ENCODE measurements at regions of chr2 and their contacts with region 1.

Region 1: GRCh38 chr2:27370026-27370815 is at the starts of genes EIF2B4 and SNX17:
- DNase-seq: peak; percentile 100
- H3K4me3 ChIP-seq: peak within 1 kb of the TSS; percentile 65 to 86 (median 78)
- H3K27ac ChIP-seq: peak within 1 kb of the TSS; percentile 50
- H3K4me1 ChIP-seq: peaks cover 14% of the 10 kb centered on the region
- H3K27me3 ChIP-seq: no peaks in the 10 kb centered on the region
- CTCF ChIP-seq: peak; percentile 89 to 91
- POLR2A ChIP-seq: peak; percentile 91
- total RNA-seq, gene EIF2B4: 43.7 and 48.9 TPM in 2 replicates
- total RNA-seq, gene SNX17: 86.5 and 103 TPM in 2 replicates

Region 2: GRCh38 chr2:27211829-27212627 is 158.2 kb before region 1 on chr2 and contains the starts of genes ATRAID and SLC5A6:
- CTCF ChIA-PET with region 1: interaction called, 3 read pairs
- POLR2A ChIA-PET with region 1: no interaction called
- dilution Hi-C with region 1: no loop called
- intact Hi-C with region 1: loop called (anchors 5 kb)
- DNase-seq: peak; percentile 92
- H3K4me3 ChIP-seq: peak within 1 kb of the TSS; percentile 68 to 91 (median 88)
- H3K27ac ChIP-seq: peak within 1 kb of the TSS; percentile 89
- H3K4me1 ChIP-seq: peaks cover 17% of the 10 kb centered on the region
- H3K27me3 ChIP-seq: no peaks in the 10 kb centered on the region
- CTCF ChIP-seq: no peak
- POLR2A ChIP-seq: peak; percentile 98
- total RNA-seq, gene ATRAID: 84.3 and 86.6 TPM in 2 replicates
- total RNA-seq, gene SLC5A6: 42.7 and 52.0 TPM in 2 replicates

Region 3: GRCh38 chr2:27249891-27250651 is 120.2 kb before region 1 on chr2:
- CTCF ChIA-PET with region 1: interaction called, 3 read pairs
- POLR2A ChIA-PET with region 1: no interaction called
- dilution Hi-C with region 1: no loop called
- intact Hi-C with region 1: loop called (anchors 5 kb)
- DNase-seq: peak; percentile 64
- H3K4me3 ChIP-seq: no peak overlapping the region
- H3K27ac ChIP-seq: no peak overlapping the region
- H3K4me1 ChIP-seq: peaks cover 15% of the 10 kb centered on the region
- H3K27me3 ChIP-seq: no peaks in the 10 kb centered on the region
- CTCF ChIP-seq: peak; percentile 83 to 89
- POLR2A ChIP-seq: no peak

Region 4: GRCh38 chr2:27322766-27323595 is 47.2 kb before region 1 on chr2 and contains the start of gene MPV17:
- CTCF ChIA-PET with region 1: interaction called, 6 read pairs
- POLR2A ChIA-PET with region 1: no interaction called
- dilution Hi-C with region 1: no loop called
- intact Hi-C with region 1: loop called (anchors 1 kb)
- DNase-seq: peak; percentile 90
- H3K4me3 ChIP-seq: peak within 1 kb of the TSS; percentile 70 to 91 (median 90)
- H3K27ac ChIP-seq: peak within 1 kb of the TSS; percentile 95
- H3K4me1 ChIP-seq: peaks cover 26% of the 10 kb centered on the region
- H3K27me3 ChIP-seq: no peaks in the 10 kb centered on the region
- CTCF ChIP-seq: no peak
- POLR2A ChIP-seq: peak; percentile 98
- total RNA-seq, gene MPV17: 66.5 and 74.7 TPM in 2 replicates

Region 5: DNA sequence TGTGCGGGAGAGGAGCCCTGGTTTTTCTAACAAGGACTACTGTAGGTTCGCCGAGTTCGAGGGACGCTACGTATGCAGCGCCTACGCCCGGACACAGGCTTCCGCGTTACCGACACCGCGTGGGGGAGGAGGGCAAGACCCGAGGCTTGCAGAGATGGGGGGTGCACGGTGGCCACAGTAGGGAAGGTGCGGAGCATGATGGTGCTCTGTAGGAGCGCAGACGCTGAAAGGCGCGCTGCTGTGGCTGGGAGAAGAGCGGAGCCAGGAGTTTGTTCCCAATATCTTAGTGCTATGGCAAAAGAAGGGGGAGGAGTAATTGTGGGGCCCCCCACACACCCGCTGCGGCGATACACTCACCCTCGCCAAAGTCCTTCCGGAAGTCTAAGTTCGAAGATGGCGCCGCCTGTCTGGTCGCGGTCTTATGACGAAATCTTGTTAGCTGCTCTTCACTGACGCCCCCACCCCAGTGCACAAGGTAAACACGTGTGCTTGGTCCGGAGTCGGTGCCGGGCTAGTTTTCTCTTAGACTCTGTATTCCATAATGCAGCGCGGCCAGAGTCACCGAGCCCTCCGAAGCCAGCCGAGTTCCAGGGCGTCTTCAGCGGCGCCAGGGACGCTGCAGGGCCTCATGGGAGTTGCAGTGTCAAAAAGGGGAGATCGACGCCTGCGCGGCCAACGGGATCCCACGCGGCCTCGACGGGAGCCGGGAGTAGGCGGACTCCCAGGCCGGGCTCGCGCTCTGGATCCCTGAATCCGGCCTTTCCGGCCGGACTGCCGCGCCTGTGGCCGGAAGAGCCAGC is 13.6 kb before region 1 on chr2 and contains the start of gene GTF3C2:
- CTCF ChIA-PET with region 1: interaction called, 8 read pairs
- POLR2A ChIA-PET with region 1: interaction called, 7 read pairs
- dilution Hi-C with region 1: no loop called
- intact Hi-C with region 1: loop called (anchors 1 kb)
- DNase-seq: peak; percentile 98
- H3K4me3 ChIP-seq: peak within 1 kb of the TSS; percentile 40 to 90 (median 63)
- H3K27ac ChIP-seq: peak within 1 kb of the TSS; percentile 83
- H3K4me1 ChIP-seq: peaks cover 16% of the 10 kb centered on the region
- H3K27me3 ChIP-seq: no peaks in the 10 kb centered on the region
- CTCF ChIP-seq: no peak
- POLR2A ChIP-seq: no peak
- total RNA-seq, gene GTF3C2: 57.4 and 63.2 TPM in 2 replicates

Region 6: GRCh38 chr2:27380626-27381545 is 10.7 kb after region 1 on chr2 and contains the start of gene ZNF513:
- CTCF ChIA-PET with region 1: interaction called, 4 read pairs
- POLR2A ChIA-PET with region 1: no interaction called
- dilution Hi-C with region 1: no loop called
- intact Hi-C with region 1: loop called (anchors 1 kb)
- DNase-seq: peak; percentile 95
- H3K4me3 ChIP-seq: peak within 1 kb of the TSS; percentile 75 to 85 (median 77)
- H3K27ac ChIP-seq: peak within 1 kb of the TSS; percentile 97
- H3K4me1 ChIP-seq: peaks cover 17% of the 10 kb centered on the region
- H3K27me3 ChIP-seq: no peaks in the 10 kb centered on the region
- CTCF ChIP-seq: no peak
- POLR2A ChIP-seq: no peak
- total RNA-seq, gene ZNF513: 19.0 and 20.7 TPM in 2 replicates

Region 7: GRCh38 chr2:27489498-27490397 is 119.5 kb after region 1 on chr2 and contains the start of gene IFT172:
- CTCF ChIA-PET with region 1: no interaction called
- POLR2A ChIA-PET with region 1: no interaction called
- dilution Hi-C with region 1: no loop called
- intact Hi-C with region 1: loop called (anchors 1 kb)
- DNase-seq: peak; percentile 99
- H3K4me3 ChIP-seq: peak within 1 kb of the TSS; percentile 9 to 66 (median 56)
- H3K27ac ChIP-seq: peak within 1 kb of the TSS; percentile 0
- H3K4me1 ChIP-seq: peaks cover 15% of the 10 kb centered on the region
- H3K27me3 ChIP-seq: no peaks in the 10 kb centered on the region
- CTCF ChIP-seq: no peak
- POLR2A ChIP-seq: peak; percentile 83
- total RNA-seq, gene IFT172: 34.1 and 35.6 TPM in 2 replicates

Measured in endothelial cell of umbilical vein (primary cell).